MCF 10A (cell line): ENCODE measurements at regions of chr7 and their contacts with region 1.

Region 1: GRCh38 chr7:38834357-38834756 is 74.6 kb downstream of the VPS41 start:
- DNase-seq: no peak
- H3K4me3 Mint-ChIP-seq: no peak overlapping the region
- H3K27ac Mint-ChIP-seq: no peak overlapping the region
- H3K4me1 Mint-ChIP-seq: peaks cover 5% of the 10 kb centered on the region
- H3K27me3 Mint-ChIP-seq: no peaks in the 10 kb centered on the region
- CTCF ChIP-seq: no peak

Region 2: DNA sequence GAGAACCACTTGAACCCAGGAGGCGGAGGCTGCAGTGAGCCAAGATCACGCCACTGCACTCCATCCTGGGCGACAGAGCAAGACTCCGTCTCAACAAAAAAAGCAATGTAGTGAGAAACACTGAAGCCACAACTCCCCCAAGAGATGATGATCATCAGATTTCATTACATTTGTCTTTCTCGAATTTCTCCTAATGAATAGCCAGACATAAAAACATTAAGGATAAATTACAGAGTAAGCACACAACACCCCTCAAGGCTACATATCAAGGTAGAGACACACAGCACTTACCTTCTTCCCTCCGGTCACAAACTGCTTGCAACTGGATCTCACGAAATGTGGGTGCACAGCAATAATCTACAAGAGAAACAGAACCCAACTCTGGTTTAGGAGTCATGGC is 16.8 kb before region 1 on chr7:
- CTCF ChIA-PET with region 1: interaction called, 6 read pairs
- POLR2A ChIA-PET with region 1: no interaction called
- intact Hi-C with region 1: loop called (anchors 2 kb)
- DNase-seq: no peak
- H3K4me3 Mint-ChIP-seq: no peak overlapping the region
- H3K27ac Mint-ChIP-seq: no peak overlapping the region
- H3K4me1 Mint-ChIP-seq: no peaks in the 10 kb centered on the region
- H3K27me3 Mint-ChIP-seq: no peaks in the 10 kb centered on the region
- CTCF ChIP-seq: no peak

Region 3: DNA sequence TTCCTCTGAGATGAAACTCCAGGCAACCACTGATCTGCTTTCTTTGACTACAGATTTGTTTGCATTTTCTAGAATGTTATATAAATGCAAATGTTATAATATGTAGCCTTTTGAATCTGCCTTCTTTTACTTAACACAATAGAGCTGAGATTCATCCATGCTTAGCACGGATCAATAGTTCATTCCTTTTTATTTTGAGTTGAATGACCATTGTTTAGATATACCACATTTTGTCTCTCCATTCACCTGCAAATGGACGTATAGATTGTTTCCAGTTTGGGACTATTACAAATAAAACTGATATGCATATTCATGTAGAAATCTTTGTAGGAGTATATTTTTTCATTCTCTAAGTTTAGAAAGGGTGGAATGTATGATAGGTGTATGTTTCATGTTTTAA is 17.0 kb after region 1 on chr7:
- CTCF ChIA-PET with region 1: no interaction called
- POLR2A ChIA-PET with region 1: no interaction called
- intact Hi-C with region 1: no loop called
- DNase-seq: no peak
- H3K4me3 Mint-ChIP-seq: no peak overlapping the region
- H3K27ac Mint-ChIP-seq: no peak overlapping the region
- H3K4me1 Mint-ChIP-seq: no peaks in the 10 kb centered on the region
- H3K27me3 Mint-ChIP-seq: no peaks in the 10 kb centered on the region
- CTCF ChIP-seq: no peak

Region 4: GRCh38 chr7:38920731-38921130 is 86.4 kb after region 1 on chr7:
- CTCF ChIA-PET with region 1: no interaction called
- POLR2A ChIA-PET with region 1: no interaction called
- intact Hi-C with region 1: no loop called
- DNase-seq: no peak
- H3K4me3 Mint-ChIP-seq: no peak overlapping the region
- H3K27ac Mint-ChIP-seq: no peak overlapping the region
- H3K4me1 Mint-ChIP-seq: no peaks in the 10 kb centered on the region
- H3K27me3 Mint-ChIP-seq: no peaks in the 10 kb centered on the region
- CTCF ChIP-seq: no peak